ENCODE measurements at regions of chr4 and their contacts with region 1.

Region 1: GRCh38 chr4:113547487-113548042 is 214.0 kb downstream of the CAMK2D start:
- DNase-seq: peak; percentile 69
- CTCF ChIP-seq: peak; percentile 91

Region 2: DNA sequence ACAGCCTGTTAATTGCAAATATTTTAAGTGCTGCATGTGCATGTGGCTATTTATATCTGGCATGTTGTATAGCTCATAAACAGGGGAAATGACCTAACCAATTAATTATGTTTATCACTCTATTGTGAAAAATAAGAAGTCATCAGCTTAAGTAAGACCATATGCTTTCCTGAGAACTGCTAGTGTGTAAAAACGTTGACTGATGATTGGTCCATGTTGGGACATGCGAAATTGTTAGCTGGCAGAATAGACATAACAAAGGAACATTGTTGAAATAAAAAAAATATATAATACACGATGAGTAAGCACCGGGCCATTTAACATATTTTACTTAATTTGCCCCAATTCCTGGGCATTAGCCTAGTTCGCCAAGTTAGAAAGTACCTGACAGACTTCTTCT is 290.6 kb before region 1 on chr4:
- in situ Hi-C with region 1: no loop called
- DNase-seq: no peak
- CTCF ChIP-seq: no peak

Region 3: DNA sequence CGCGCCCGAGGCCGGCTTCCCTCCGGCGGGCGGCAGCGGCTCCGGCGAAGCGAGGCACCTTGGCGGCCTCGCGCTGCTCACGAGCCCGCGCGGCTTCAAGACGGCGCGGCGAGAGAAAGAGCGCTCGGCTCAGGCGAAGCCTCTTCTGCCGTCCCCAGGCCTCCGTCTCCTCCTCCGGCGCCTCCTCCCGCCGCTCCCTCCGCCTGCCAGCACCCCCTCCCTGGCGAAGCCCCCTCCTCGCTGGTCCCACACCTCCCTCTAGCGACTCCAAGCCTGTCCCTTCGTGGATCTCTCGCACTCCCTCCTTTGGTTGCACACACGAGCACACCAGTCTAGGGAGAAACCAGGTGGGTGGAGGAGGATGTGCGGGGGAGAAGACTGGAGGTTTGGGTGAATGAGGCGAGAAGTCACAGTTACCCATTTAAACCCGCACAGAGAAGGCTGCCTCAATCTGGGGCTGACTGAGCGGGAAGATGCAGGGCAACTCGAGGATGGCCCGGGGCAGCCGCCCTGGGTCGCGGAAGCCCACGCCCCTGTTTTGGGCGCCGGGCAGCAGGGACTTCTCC is 214.1 kb after region 1 on chr4 and contains the start of gene CAMK2D:
- in situ Hi-C with region 1: loop called (anchors 10 kb)
- DNase-seq: peak; percentile 82
- CTCF ChIP-seq: peak; percentile 74